ENCODE measurements at regions of chr3 and their contacts with region 1.

Region 1: DNA sequence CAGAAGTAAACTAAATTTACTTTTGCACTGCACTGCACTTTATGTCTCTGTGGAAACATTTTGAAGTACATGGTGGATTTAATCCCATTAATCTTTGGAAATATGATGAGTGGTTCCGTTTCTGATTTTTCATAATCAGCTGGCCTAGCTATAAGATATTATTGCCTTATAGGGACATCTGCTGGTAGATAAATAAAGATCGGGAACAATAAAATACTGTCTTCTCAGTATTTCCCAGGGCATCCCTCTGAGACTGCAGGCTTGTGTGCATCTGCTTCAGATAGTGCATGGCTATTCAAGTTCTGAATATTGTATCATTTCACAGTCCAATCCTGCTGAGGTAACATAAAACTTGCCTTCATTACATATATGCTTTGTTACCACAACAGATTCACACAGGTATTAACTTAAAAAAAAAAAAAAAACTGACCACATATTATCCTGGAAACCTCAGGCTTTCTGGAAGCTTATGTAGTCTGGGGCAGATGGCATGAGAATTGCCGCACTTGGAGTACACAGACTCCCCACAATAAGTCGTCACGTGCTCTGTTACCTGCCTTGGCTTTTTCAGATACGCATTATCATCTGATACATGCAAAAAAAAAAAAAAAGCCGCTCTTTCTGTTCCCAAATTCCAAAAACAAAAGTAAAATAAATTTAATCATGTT is 330.8 kb upstream of the AGTR1 start:
- DNase-seq: no peak
- H3K4me3 ChIP-seq: no peak overlapping the region
- H3K27ac ChIP-seq: no peak overlapping the region
- H3K4me1 ChIP-seq: no peaks in the 10 kb centered on the region
- H3K27me3 ChIP-seq: no peaks in the 10 kb centered on the region
- CTCF ChIP-seq: no peak; the same call in 1 of the 2 replicates

Region 2: GRCh38 chr3:146827391-146827790 is 1539.5 kb before region 1 on chr3:
- CTCF ChIA-PET with region 1: no interaction called
- POLR2A ChIA-PET with region 1: no interaction called
- intact Hi-C with region 1: loop called (anchors 10 kb)
- DNase-seq: no peak
- H3K4me3 ChIP-seq: no peak overlapping the region
- H3K27ac ChIP-seq: no peak overlapping the region
- H3K4me1 ChIP-seq: no peaks in the 10 kb centered on the region
- H3K27me3 ChIP-seq: no peaks in the 10 kb centered on the region
- CTCF ChIP-seq: no peak

Region 3: DNA sequence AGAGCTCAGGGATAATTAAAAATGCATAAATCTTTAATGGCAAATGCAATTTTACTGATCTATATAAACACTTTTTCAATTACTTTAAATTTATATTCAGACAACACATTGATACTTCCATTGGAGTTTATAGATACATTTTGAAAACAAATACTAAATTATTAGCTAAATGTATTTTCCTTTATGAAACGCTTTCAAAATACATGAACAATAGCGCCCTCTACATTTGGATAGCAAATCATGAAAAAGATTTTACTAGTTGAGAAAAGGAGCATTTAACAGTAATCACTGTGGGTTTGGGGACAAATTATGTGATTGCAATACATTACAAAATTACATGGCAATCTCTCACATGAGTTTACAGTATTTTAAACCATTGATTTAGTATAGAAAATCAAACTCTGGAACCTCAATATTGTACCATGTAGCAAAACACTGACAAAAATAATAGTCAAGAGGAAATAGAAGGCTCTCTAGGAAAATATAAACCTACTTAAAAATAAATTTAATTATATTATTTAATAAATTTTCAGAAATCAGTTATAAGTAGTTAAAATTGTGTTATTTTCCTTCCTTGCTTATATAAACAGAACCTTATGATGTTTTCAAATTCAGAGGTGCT is 749.8 kb before region 1 on chr3:
- CTCF ChIA-PET with region 1: no interaction called
- POLR2A ChIA-PET with region 1: no interaction called
- intact Hi-C with region 1: loop called (anchors 10 kb)
- DNase-seq: no peak
- H3K4me3 ChIP-seq: no peak overlapping the region
- H3K27ac ChIP-seq: no peak overlapping the region
- H3K4me1 ChIP-seq: no peaks in the 10 kb centered on the region
- H3K27me3 ChIP-seq: no peaks in the 10 kb centered on the region
- CTCF ChIP-seq: peak; percentile 67

Region 4: DNA sequence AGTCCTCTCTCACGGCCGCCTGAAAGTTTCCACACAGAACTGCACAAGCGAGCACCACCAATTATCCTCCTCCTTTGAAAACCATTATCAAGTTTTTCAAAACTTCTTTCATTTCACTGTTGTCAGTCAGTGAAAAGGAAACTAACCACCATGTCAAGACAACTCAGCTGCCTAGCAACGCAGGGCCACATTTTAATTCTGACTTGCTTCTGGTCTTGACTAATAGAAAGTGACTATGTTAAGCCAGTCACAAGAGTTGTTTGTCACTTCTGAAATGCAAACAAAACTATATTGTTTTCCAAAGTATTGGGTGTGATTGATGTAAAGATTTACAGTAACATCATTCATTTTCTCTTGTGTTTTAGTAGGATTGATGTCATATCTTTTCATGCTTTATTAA is 281.9 kb before region 1 on chr3:
- CTCF ChIA-PET with region 1: no interaction called
- POLR2A ChIA-PET with region 1: no interaction called
- intact Hi-C with region 1: loop called (anchors 5 kb)
- DNase-seq: no peak
- H3K4me3 ChIP-seq: no peak overlapping the region
- H3K27ac ChIP-seq: no peak overlapping the region
- H3K4me1 ChIP-seq: no peaks in the 10 kb centered on the region
- H3K27me3 ChIP-seq: no peaks in the 10 kb centered on the region
- CTCF ChIP-seq: no peak

Measured in PC-9 (cell line).